ENCODE measurements at regions of chr4 and their contacts with region 1.

Region 1: GRCh38 chr4:87465739-87466366 is 43.5 kb downstream of the NUDT9 start:
- DNase-seq: no peak
- ATAC-seq: peak in 1 of 4 donors; percentile 58
- H3K4me3 ChIP-seq: no peak overlapping the region
- H3K27ac ChIP-seq: no peak overlapping the region
- H3K4me1 ChIP-seq: peaks cover 0 to 4% (median 0%) of the 10 kb centered on the region in 12 donors
- H3K27me3 ChIP-seq: no peaks in the 10 kb centered on the region
- CTCF ChIP-seq: peak; percentile 43 to 81 (median 69)
- POLR2A ChIP-seq: no peak

Region 2: GRCh38 chr4:87150498-87151261 is 315.2 kb before region 1 on chr4:
- intact Hi-C with region 1: loop called in 5 of 10 experiments (anchors 5 to 10 kb)
- DNase-seq: peak in 2 of 5 donors; percentile 27 to 46
- ATAC-seq: peak; percentile 38 to 82 (median 74)
- H3K4me3 ChIP-seq: no peak overlapping the region
- H3K27ac ChIP-seq: no peak overlapping the region
- H3K4me1 ChIP-seq: no peaks in the 10 kb centered on the region
- H3K27me3 ChIP-seq: no peaks in the 10 kb centered on the region
- CTCF ChIP-seq: peak; percentile 82 to 94 (median 90)
- POLR2A ChIP-seq: no peak

Region 3: DNA sequence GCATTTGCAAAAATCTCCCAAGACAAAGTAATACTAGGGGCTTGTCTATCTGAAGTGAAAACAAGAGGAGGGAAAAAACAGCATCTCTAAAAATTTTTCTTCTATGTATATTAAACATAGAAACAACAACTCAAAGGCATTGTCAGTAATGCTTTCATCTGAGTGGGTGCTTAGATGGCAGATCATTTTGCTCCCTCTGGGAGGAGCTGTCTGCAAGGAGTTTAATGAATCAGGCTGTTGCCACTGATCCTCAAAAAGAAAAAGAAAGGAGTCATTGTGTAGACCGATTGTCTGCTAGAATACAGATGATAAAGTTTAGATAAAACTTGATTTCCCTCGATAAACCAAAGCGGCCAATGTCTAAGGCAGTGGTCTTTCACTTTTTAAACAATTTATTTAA is 195.7 kb before region 1 on chr4:
- intact Hi-C with region 1: loop called in 8 of 10 experiments (anchors 5 to 10 kb)
- DNase-seq: peak in 1 of 5 donors; percentile 11
- ATAC-seq: peak in 2 of 4 donors; percentile 48 to 49
- H3K4me3 ChIP-seq: no peak overlapping the region
- H3K27ac ChIP-seq: no peak overlapping the region
- H3K4me1 ChIP-seq: no peaks in the 10 kb centered on the region
- H3K27me3 ChIP-seq: no peaks in the 10 kb centered on the region
- CTCF ChIP-seq: peak in 11 of 12 donors; percentile 29 to 72 (median 52)
- POLR2A ChIP-seq: no peak

Region 4: GRCh38 chr4:87370068-87370467 is 95.8 kb before region 1 on chr4:
- intact Hi-C with region 1: loop called in 9 of 10 experiments (anchors 1 to 5 kb)
- DNase-seq: no peak
- ATAC-seq: no peak
- H3K4me3 ChIP-seq: no peak overlapping the region
- H3K27ac ChIP-seq: peak overlapping the region in 6 of 12 donors; percentile 7 to 59 (median 32)
- H3K4me1 ChIP-seq: peaks cover 0 to 12% (median 2%) of the 10 kb centered on the region in 12 donors
- H3K27me3 ChIP-seq: no peaks in the 10 kb centered on the region
- CTCF ChIP-seq: no peak
- POLR2A ChIP-seq: no peak

Region 5: GRCh38 chr4:87422104-87423052 is 43.5 kb before region 1 on chr4 and contains the start of gene NUDT9:
- intact Hi-C with region 1: loop called in 1 of 10 experiments (anchors 5 kb)
- DNase-seq: peak; percentile 95 to 98 (median 96)
- ATAC-seq: peak; percentile 93 to 98 (median 97)
- H3K4me3 ChIP-seq: peak within 1 kb of the TSS; percentile 59 to 99 (median 80)
- H3K27ac ChIP-seq: peak within 1 kb of the TSS; percentile 83 to 97 (median 90)
- H3K4me1 ChIP-seq: peaks cover 0 to 34% (median 24%) of the 10 kb centered on the region in 12 donors
- H3K27me3 ChIP-seq: no peaks in the 10 kb centered on the region
- CTCF ChIP-seq: no peak
- POLR2A ChIP-seq: peak in 1 of 2 donors; percentile 69
- total RNA-seq, gene NUDT9: 17.1 to 29.7 (median 24.0) TPM